ENCODE measurements at regions of chr2 and their contacts with region 1.

Region 1: DNA sequence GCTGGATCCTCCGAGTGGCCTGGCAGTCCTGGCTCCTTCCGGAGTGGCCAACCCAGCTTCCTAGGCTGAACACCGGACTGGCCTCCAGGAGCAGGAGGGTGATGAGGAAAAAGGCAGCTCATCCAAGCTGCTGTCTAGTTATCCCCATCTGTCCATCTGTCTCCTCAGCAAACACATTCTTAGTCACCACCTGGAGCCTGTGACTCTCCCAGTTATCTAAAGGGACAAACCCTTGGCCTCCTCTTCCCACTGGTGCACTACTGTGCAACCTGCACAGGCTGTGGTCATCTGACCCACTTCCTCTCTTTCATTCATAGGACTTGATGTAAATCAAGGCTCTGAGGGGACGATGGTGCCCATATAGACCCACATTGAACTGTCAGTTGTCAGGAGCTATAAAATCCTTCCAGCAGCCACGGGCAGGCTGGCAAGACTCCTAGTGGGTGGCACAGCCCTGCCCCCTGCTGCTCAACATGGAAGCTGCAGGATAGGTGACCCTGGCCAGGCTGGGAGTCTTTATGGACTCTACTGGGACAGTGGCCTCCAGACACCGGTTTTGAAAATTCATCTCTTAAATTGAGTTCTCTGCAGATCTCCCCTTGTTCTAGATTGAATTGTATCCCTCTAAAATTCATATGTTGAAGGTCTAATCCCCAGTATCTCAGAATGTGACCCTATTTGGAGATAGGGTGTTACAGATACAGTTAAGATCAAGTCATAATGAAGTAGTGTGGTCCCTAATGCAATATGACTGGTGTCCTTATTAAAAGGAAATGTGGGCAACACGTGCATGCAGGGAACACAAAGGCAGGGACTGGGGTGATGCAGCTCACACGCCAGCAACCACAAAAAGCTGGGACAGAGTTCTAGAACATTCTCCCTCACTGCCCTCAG is 29.3 kb upstream of the DUSP2 start:
- DNase-seq: peak; percentile 78 to 83 (median 79)
- H3K4me3 ChIP-seq: no peak overlapping the region
- H3K4me3 Mint-ChIP-seq: no peak overlapping the region
- H3K27ac ChIP-seq: no peak overlapping the region
- H3K27ac Mint-ChIP-seq: peak overlapping the region in 6 of 7 donors; percentile 25 to 89 (median 70)
- H3K4me1 ChIP-seq: peaks cover 5% of the 10 kb centered on the region
- H3K4me1 Mint-ChIP-seq: peaks cover 5 to 6% (median 5%) of the 10 kb centered on the region in 4 donors
- H3K27me3 ChIP-seq: no peaks in the 10 kb centered on the region
- H3K27me3 Mint-ChIP-seq: no peaks in the 10 kb centered on the region

Region 2: DNA sequence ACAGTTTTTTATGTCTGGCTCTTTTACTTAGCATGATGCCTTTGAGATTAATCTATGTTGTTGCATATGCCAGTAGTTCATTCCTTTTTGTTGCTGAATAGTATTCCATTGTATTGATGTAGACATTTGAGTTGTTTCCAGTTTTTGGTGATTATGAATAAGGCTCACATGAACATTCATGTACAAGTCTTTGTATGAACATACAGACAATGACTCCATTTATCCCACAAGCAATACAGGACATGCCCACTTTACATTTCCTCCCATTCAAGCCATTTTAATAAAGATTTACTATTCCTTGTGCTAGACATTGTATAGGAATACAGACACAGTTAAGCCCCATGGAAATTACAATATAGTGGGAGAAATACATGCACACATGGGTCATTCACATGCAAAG is 464.7 kb before region 1 on chr2:
- CTCF ChIA-PET with region 1: no interaction called
- POLR2A ChIA-PET with region 1: no interaction called
- intact Hi-C with region 1: no loop called
- DNase-seq: no peak
- H3K4me3 ChIP-seq: no peak overlapping the region
- H3K4me3 Mint-ChIP-seq: no peak overlapping the region
- H3K27ac ChIP-seq: no peak overlapping the region
- H3K27ac Mint-ChIP-seq: no peak overlapping the region
- H3K4me1 ChIP-seq: no peaks in the 10 kb centered on the region
- H3K4me1 Mint-ChIP-seq: no peaks in the 10 kb centered on the region
- H3K27me3 ChIP-seq: no peaks in the 10 kb centered on the region
- H3K27me3 Mint-ChIP-seq: peaks cover 5% of the 10 kb centered on the region in 2 donors

Region 3: DNA sequence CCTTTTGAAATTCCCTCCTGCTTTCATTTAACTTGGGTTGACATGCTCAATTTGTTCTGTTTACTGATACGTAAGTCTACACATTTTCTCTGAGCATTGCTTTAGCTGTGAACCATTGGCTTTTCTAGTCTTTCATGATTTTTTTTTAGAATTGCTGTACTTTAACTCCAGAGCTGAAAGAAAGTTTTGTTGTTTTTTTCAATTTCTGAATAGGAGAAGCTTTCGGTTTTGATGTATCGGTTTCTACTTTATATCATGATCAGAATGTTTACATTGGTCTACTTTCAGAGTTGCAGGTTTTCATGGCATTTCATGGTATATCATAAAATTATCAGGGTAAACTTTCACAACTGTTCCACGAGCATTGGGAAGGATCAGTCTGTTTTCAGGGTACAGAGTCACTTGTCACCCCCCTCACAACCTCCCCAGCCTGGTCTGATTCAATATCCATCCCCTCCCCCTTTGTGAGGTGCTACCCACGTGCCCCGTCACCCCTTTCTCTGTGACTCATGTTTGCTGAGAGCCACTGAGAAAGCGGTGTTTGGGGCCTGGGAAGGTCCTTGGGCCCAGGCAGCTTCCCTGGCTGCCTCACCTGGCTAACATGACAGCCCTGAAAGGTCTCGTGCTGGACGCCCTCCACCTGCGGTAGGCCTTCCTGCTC is 43.2 kb before region 1 on chr2:
- CTCF ChIA-PET with region 1: interaction called, 648 read pairs
- POLR2A ChIA-PET with region 1: interaction called, 113 read pairs
- intact Hi-C with region 1: no loop called
- DNase-seq: no peak
- H3K4me3 ChIP-seq: no peak overlapping the region
- H3K4me3 Mint-ChIP-seq: no peak overlapping the region
- H3K27ac ChIP-seq: no peak overlapping the region
- H3K27ac Mint-ChIP-seq: peak overlapping the region in 4 of 7 donors; percentile 3 to 53 (median 25)
- H3K4me1 ChIP-seq: no peaks in the 10 kb centered on the region
- H3K4me1 Mint-ChIP-seq: peaks cover 0 to 11% (median 3%) of the 10 kb centered on the region in 4 donors
- H3K27me3 ChIP-seq: no peaks in the 10 kb centered on the region
- H3K27me3 Mint-ChIP-seq: no peaks in the 10 kb centered on the region

Region 4: GRCh38 chr2:96145036-96145847 is 29.3 kb before region 1 on chr2 and contains the start of gene DUSP2:
- CTCF ChIA-PET with region 1: interaction called, 648 read pairs
- POLR2A ChIA-PET with region 1: interaction called, 92 read pairs
- intact Hi-C with region 1: no loop called
- DNase-seq: peak; percentile 86 to 92 (median 87)
- H3K4me3 ChIP-seq: peak within 1 kb of the TSS; percentile 71 to 86
- H3K4me3 Mint-ChIP-seq: peak within 1 kb of the TSS; percentile 93 to 96 (median 94)
- H3K27ac ChIP-seq: peak within 1 kb of the TSS; percentile 100
- H3K27ac Mint-ChIP-seq: peak within 1 kb of the TSS; percentile 98 to 100 (median 99)
- H3K4me1 ChIP-seq: peaks cover 62% of the 10 kb centered on the region
- H3K4me1 Mint-ChIP-seq: peaks cover 33 to 79% (median 57%) of the 10 kb centered on the region in 4 donors
- H3K27me3 ChIP-seq: no peaks in the 10 kb centered on the region
- H3K27me3 Mint-ChIP-seq: no peaks in the 10 kb centered on the region
- total RNA-seq, gene DUSP2: 33.4 to 34.6 TPM

Region 5: DNA sequence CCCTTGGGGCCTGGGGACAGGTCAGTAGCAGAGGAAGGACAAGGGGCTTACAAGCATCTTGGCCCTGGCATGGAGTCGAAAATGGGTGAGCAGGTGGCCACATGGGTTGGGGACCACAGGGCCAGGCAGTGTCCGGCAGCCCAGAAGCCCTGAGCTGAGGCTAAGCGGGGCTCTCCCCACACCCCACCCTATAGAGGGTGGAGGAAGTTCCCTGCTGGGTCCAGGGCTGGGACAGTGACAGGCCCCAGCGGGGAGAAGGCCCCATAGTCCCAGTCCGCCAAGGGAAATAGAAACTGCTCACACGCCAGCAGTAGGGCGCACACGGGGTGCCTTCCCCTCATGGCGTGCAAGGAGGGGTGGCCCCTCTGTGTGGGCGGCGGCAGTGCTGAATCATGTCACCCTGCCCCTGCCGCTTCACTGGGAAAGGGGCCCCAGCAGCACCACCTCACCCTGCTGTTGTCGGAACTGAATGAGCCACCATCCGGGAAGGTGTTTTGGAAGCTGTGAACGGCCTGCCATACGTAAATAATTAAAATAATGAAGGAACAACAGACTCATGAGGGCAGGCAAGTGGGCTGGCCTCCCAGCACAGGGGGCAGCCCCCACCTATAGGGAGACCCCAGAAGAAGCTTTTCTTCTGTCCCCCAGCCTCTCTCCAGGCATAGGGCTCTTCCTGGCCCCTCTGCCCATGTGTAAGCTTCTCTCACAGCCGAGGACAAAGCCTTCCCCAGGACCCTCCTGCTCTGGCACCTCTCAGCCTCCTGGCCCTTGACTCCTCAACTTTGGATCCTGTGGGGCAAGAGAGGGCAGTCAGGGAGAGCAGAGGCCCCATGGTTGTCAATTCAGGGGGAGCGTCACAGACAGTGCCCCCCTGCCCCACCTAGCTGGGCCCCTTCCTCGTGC is 16.6 kb before region 1 on chr2:
- CTCF ChIA-PET with region 1: interaction called, 60 read pairs
- POLR2A ChIA-PET with region 1: interaction called, 13 read pairs
- intact Hi-C with region 1: no loop called
- DNase-seq: peak; percentile 48 to 84 (median 58)
- H3K4me3 ChIP-seq: peak overlapping the region; percentile 4 to 9
- H3K4me3 Mint-ChIP-seq: peak overlapping the region; percentile 21 to 91 (median 68)
- H3K27ac ChIP-seq: peak overlapping the region; percentile 38
- H3K27ac Mint-ChIP-seq: peak overlapping the region; percentile 77 to 94 (median 88)
- H3K4me1 ChIP-seq: peaks cover 58% of the 10 kb centered on the region
- H3K4me1 Mint-ChIP-seq: peaks cover 42 to 78% (median 58%) of the 10 kb centered on the region in 4 donors
- H3K27me3 ChIP-seq: no peaks in the 10 kb centered on the region
- H3K27me3 Mint-ChIP-seq: no peaks in the 10 kb centered on the region

Region 6: GRCh38 chr2:96208143-96209010 is 33.9 kb after region 1 on chr2 and contains the start of gene STARD7:
- CTCF ChIA-PET with region 1: interaction called, 7 read pairs
- POLR2A ChIA-PET with region 1: interaction called, 11 read pairs
- intact Hi-C with region 1: no loop called
- DNase-seq: peak; percentile 94 to 96 (median 95)
- H3K4me3 ChIP-seq: peak within 1 kb of the TSS; percentile 45 to 62
- H3K4me3 Mint-ChIP-seq: peak within 1 kb of the TSS; percentile 88 to 98 (median 94)
- H3K27ac ChIP-seq: peak within 1 kb of the TSS; percentile 81
- H3K27ac Mint-ChIP-seq: peak within 1 kb of the TSS; percentile 92 to 96 (median 95)
- H3K4me1 ChIP-seq: peaks cover 53% of the 10 kb centered on the region
- H3K4me1 Mint-ChIP-seq: peaks cover 31 to 57% (median 51%) of the 10 kb centered on the region in 4 donors
- H3K27me3 ChIP-seq: no peaks in the 10 kb centered on the region
- H3K27me3 Mint-ChIP-seq: no peaks in the 10 kb centered on the region
- total RNA-seq, gene STARD7: 84.9 to 92.9 TPM

Region 7: DNA sequence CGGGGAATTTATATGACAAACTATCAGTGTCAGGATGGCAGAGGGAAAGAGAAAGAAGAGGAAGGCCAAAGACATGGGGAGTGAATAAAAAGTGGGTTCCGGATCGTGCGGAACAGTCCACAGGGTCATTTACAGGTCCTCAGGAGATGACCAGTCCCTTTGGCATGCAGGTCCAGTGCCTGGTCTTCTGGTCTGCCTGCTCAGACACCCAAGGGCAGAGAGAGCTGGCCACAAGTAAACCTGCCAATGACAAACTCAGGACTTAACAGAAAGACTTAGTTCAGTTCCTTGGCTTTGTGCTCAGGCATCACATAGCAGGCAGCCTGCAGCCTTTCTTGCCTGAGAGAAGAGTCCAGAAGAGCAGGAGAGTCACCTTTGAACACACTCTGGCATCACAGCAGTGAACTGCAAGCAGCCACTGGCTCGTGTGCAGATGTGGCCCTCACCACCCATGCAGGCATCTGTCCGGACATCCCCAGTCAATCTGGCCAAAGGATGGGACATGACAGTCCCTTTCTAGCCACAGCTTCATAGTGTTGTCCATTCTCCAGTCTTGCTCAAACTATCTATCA is 77.3 kb after region 1 on chr2:
- CTCF ChIA-PET with region 1: no interaction called
- POLR2A ChIA-PET with region 1: no interaction called
- intact Hi-C with region 1: no loop called
- DNase-seq: no peak
- H3K4me3 ChIP-seq: no peak overlapping the region
- H3K4me3 Mint-ChIP-seq: no peak overlapping the region
- H3K27ac ChIP-seq: no peak overlapping the region
- H3K27ac Mint-ChIP-seq: peak overlapping the region in 6 of 7 donors; percentile 17 to 87 (median 54)
- H3K4me1 ChIP-seq: peaks cover 7% of the 10 kb centered on the region
- H3K4me1 Mint-ChIP-seq: peaks cover 10 to 20% (median 17%) of the 10 kb centered on the region in 4 donors
- H3K27me3 ChIP-seq: no peaks in the 10 kb centered on the region
- H3K27me3 Mint-ChIP-seq: no peaks in the 10 kb centered on the region

Region 8: DNA sequence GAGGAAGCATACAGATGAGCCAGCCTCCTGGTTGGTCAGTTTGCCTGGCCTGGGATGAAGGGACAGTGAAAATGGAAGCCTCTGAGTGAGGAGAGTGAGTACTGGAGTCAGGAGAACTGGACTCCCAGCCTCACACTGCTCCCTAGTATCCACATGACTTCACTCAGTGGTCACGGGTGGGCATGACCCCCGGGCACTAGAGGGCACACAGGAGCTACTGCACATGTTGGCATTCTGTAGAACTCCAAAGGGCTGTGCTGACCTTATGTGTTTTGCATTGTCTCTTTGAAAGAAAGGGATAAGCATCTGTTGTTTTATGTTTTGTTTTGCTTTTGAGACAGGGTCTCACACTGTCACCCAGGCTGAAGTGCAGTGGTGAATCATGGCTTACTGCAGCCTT is 184.8 kb after region 1 on chr2:
- CTCF ChIA-PET with region 1: no interaction called
- POLR2A ChIA-PET with region 1: no interaction called
- intact Hi-C with region 1: no loop called
- DNase-seq: peak in 4 of 5 donors; percentile 22 to 41 (median 38)
- H3K4me3 ChIP-seq: no peak overlapping the region
- H3K4me3 Mint-ChIP-seq: no peak overlapping the region
- H3K27ac ChIP-seq: peak overlapping the region; percentile 2
- H3K27ac Mint-ChIP-seq: peak overlapping the region; percentile 69 to 97 (median 93)
- H3K4me1 ChIP-seq: peaks cover 21% of the 10 kb centered on the region
- H3K4me1 Mint-ChIP-seq: peaks cover 13 to 20% (median 14%) of the 10 kb centered on the region in 4 donors
- H3K27me3 ChIP-seq: no peaks in the 10 kb centered on the region
- H3K27me3 Mint-ChIP-seq: no peaks in the 10 kb centered on the region

Measured in CD4-positive, alpha-beta memory T cell (primary cell).